Common myeloid progenitor, CD34-positive (primary cell): ENCODE measurements at regions of chr4 and their contacts with region 1.

Region 1: GRCh38 chr4:55853484-55854046 is at the start of gene EXOC1:
- DNase-seq: peak; percentile 96
- H3K4me3 ChIP-seq: peak within 1 kb of the TSS; percentile 87 to 97 (median 94)
- H3K27ac ChIP-seq: peak within 1 kb of the TSS; percentile 67 to 88
- H3K4me1 ChIP-seq: peaks cover 9 to 18% (median 11%) of the 10 kb centered on the region in 4 experiments
- H3K27me3 ChIP-seq: peaks cover 0 to 3% (median 0%) of the 10 kb centered on the region in 5 experiments

Region 2: GRCh38 chr4:55754754-55755350 is 98.7 kb before region 1 on chr4:
- CTCF ChIA-PET with region 1: no interaction called
- POLR2A ChIA-PET with region 1: no interaction called
- DNase-seq: no peak
- H3K4me3 ChIP-seq: no peak overlapping the region
- H3K27ac ChIP-seq: no peak overlapping the region
- H3K4me1 ChIP-seq: peaks cover 0 to 8% (median 3%) of the 10 kb centered on the region in 4 experiments
- H3K27me3 ChIP-seq: no peaks in the 10 kb centered on the region

Region 3: DNA sequence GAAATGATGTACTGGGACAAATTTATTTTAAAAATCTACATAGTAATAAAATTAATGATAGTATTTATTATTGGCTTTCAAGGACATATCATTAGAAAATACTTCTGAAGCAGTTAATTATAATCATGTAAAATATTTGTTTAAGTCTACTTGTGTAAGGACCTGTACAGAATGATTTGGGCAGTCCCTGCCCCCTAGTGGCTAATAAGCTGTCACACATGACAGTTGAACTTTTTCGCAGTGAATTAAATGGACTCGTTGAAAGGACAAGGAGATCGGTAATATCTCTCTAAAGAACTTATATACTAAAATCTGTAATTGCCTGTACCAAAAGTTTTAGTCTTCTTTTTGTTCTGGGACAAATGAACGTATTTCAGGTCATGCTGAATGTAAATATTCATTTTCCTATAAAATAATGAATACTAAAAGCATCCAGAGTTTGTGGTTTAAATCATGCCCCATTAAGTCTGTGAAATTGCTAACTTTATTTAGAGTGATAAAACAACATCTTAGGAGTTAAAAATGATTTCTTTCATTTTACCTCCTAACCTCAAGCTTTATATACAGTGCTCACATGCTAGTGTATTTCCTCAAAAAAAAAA is 13.5 kb after region 1 on chr4:
- CTCF ChIA-PET with region 1: interaction called, 11 read pairs
- POLR2A ChIA-PET with region 1: no interaction called
- DNase-seq: peak; percentile 52 to 80 (median 72)
- H3K4me3 ChIP-seq: no peak overlapping the region
- H3K27ac ChIP-seq: peak overlapping the region in 1 of 2 experiments; percentile 63
- H3K4me1 ChIP-seq: peaks cover 4 to 11% (median 8%) of the 10 kb centered on the region in 4 experiments
- H3K27me3 ChIP-seq: no peaks in the 10 kb centered on the region